GM18951 (cell line): ENCODE measurements at regions of chr17 and their contacts with region 1.

Region 1: DNA sequence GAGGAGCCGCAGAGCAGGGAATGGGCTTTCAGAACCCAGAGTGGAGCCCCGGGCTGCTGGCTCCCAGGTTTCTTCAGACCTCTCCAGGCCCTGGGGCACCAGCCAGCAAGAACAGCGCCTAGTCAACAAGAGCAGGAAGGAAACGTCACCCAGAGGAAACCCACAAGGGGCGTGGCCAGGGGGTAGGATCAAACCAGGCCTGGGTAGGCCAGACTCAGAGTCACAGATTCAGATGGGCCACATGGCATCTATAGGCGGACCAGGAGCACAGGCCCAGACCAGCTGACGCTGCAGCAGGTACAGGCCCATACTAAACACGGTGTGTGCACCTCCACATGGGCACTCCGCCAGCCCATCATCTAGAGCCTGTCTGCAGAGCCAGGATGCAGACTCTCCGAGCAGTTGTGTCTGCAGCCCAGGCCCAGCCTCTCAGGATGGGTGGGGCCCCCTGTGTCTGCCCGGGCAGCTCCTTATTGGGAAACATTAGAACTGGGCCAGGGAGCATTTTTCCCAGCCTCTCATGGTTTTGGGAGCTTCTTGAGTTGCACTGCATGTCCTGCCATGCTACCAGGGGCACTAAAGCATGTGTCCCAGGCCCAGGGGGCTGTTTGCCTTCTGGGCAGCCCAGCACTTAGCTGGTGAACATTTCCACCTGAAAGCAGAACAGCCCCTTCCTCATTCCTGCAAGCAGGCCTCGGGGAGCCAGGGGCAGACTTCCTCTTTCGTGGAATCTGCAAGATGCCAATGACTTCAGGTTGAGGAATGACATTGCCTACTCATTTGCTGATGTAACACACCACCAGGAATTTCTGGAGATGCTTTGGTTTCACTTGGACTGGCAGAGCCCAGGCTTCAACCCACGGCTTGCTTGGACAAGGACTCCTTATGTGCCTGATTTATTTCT is at the start of gene NLRP1:
- POLR2A ChIP-seq: peak; percentile 70

Region 2: GRCh38 chr17:5715478-5715877 is 130.8 kb after region 1 on chr17:
- in situ Hi-C with region 1: loop called (anchors 10 kb)
- POLR2A ChIP-seq: no peak

Region 3: GRCh38 chr17:6413065-6413464 is 828.4 kb after region 1 on chr17:
- in situ Hi-C with region 1: loop called (anchors 10 kb)
- POLR2A ChIP-seq: no peak